Activated T-helper 1 cell treated with anti-CD3 and anti-CD28 coated beads, Interleukin-12 subunit alpha, Interleukin-12 subunit beta, Interleukin-2, Interleukin-4 antibody, amounts not matched to agents 30 ng/mL and 10 ng/mL and 1 ng/mL, durations not matched to agents 14 hours and 24 hours and 36 hours (primary cell): ENCODE measurements at regions of chr15 and their contacts with region 1.

Region 1: DNA sequence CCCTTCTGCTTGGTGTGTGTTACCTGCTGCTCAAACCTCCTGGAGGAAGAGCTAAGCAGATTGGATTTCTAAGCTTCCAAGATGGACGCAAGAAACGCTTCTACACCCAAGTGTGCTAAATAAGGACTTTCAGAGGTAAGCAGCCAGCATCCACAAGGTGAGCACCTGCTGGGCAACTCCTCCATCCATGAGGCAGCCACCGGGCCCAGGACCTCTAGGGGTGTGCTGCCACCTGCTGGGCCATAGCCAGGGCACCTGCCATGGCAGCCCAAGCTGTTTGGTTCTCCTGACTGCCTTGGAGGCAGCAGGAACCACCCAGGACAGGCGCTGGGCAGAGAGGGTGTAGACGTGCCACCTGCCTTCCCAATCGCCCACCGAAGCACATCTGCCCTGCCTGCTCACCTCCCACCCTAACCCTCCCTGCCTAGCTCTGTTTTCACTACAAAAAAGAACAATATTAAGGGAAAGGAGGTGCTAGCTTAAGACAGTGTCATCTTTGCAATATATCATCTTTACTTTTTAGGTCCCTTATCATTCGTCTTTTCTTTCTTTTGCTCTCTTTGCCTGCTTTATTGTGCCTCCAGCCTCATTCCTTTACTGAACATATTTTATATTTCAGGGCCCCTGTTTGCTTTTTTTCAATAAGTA is 12.9 kb downstream of the C15orf62 start:
- DNase-seq: peak; percentile 74
- H3K4me3 Mint-ChIP-seq: no peak overlapping the region
- H3K27ac Mint-ChIP-seq: no peak overlapping the region
- H3K4me1 Mint-ChIP-seq: peaks cover 21% of the 10 kb centered on the region
- H3K27me3 Mint-ChIP-seq: no peaks in the 10 kb centered on the region

Region 2: DNA sequence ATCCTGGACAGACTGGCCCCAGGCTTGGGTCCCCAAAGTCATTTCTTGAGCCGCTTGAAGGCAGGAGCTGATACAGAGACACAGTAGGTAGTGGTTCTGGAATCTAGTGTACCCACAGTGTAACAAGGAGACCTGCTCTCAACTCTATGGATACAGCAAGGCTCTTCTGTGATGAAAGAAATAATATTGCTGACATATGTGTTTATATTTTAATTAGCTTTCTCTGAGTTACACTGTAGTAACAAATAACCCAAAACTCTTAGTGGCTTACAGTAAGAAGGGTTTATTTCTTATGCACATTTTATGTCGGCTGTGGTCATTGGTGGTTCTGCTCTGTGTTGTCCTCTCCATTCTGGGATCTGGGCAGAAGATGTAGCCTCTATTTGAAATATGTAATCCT is 266.4 kb before region 1 on chr15:
- intact Hi-C with region 1: loop called (anchors 1 kb)
- DNase-seq: no peak
- H3K4me3 Mint-ChIP-seq: no peak overlapping the region
- H3K27ac Mint-ChIP-seq: no peak overlapping the region
- H3K4me1 Mint-ChIP-seq: peaks cover 12% of the 10 kb centered on the region
- H3K27me3 Mint-ChIP-seq: peaks cover 36% of the 10 kb centered on the region

Region 3: GRCh38 chr15:40593588-40594428 is 188.9 kb before region 1 on chr15 and contains the start of gene KNL1:
- intact Hi-C with region 1: loop called (anchors 2 kb)
- DNase-seq: peak; percentile 88
- H3K4me3 Mint-ChIP-seq: peak within 1 kb of the TSS; percentile 93
- H3K27ac Mint-ChIP-seq: peak within 1 kb of the TSS; percentile 98
- H3K4me1 Mint-ChIP-seq: peaks cover 45% of the 10 kb centered on the region
- H3K27me3 Mint-ChIP-seq: peaks cover 2% of the 10 kb centered on the region
- total RNA-seq, gene KNL1: 21.6 and 22.4 TPM in 2 replicates

Region 4: DNA sequence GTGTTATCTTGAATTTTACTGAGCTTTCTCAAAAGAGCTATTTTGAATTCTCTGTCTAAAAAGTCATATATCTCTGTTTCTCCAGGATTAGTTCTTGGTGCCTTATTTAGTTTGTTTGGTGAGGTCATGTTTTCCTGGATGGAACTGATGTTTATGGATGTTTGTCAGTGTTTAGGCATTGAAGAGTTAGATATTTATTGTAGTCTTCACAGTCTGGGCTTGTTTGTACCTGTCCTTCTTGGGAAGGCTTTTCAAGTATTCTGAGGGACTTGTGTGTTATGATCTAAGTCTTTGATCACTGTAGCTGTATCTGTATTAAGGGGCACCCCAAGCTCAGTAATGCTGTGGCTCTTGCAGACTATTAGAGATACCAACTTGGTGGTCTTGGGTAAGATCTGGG is 98.3 kb before region 1 on chr15:
- intact Hi-C with region 1: loop called (anchors 1 kb)
- DNase-seq: no peak
- H3K4me3 Mint-ChIP-seq: no peak overlapping the region
- H3K27ac Mint-ChIP-seq: no peak overlapping the region
- H3K4me1 Mint-ChIP-seq: no peaks in the 10 kb centered on the region
- H3K27me3 Mint-ChIP-seq: no peaks in the 10 kb centered on the region

Region 5: GRCh38 chr15:40702077-40702476 is 80.6 kb before region 1 on chr15:
- intact Hi-C with region 1: loop called (anchors 1 kb)
- DNase-seq: no peak
- H3K4me3 Mint-ChIP-seq: no peak overlapping the region
- H3K27ac Mint-ChIP-seq: peak overlapping the region; percentile 18
- H3K4me1 Mint-ChIP-seq: peaks cover 36% of the 10 kb centered on the region
- H3K27me3 Mint-ChIP-seq: no peaks in the 10 kb centered on the region

Region 6: DNA sequence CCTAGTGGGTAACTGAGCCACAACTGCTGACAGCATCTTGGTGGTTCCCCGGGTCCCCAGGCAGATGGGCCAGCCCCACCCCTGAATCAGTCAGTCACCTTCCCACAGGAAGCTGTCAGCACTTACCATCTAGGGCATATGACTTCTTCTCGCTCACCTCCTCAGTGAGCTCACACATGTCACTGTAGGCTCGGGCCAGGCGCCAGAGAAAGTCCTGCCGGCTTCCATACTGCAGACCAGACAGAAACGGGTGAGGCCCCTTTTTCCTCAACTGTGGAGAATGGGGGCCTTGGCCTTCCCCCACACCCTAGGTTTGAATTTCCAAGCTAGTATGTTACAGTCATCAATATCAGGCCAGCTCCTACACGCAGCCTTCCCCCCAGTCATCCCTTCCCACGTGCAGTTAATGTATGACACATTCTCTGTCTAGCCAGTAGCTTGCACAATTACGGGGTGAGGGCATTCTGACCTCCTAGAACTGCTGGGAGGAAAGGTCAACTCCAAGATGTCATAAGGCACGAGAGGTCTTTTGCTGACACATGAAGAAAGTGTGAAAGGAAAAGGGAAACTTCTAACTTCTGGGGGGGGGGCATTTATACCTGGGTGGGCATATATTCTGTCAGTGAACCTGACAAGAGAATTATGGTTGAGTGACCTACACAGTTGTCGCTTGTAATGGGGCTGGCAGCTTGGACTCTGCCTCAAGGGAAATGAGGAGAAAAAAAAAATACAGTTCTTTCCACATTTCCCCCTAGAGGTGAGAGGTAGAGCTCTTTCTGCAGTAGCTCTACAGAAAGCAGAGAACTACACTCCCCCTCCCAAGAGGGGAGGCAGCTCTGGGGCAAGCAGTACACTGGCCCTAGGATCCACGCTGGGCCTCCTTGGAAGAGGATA is 38.5 kb before region 1 on chr15:
- intact Hi-C with region 1: loop called (anchors 2 kb)
- DNase-seq: peak; percentile 70
- H3K4me3 Mint-ChIP-seq: peak overlapping the region; percentile 60
- H3K27ac Mint-ChIP-seq: peak overlapping the region; percentile 95
- H3K4me1 Mint-ChIP-seq: peaks cover 43% of the 10 kb centered on the region
- H3K27me3 Mint-ChIP-seq: no peaks in the 10 kb centered on the region

Region 7: GRCh38 chr15:40763801-40764732 is 18.6 kb before region 1 on chr15 and contains the start of gene GCHFR:
- intact Hi-C with region 1: loop called (anchors 1 kb)
- DNase-seq: peak; percentile 73
- H3K4me3 Mint-ChIP-seq: peak within 1 kb of the TSS; percentile 81
- H3K27ac Mint-ChIP-seq: peak within 1 kb of the TSS; percentile 87
- H3K4me1 Mint-ChIP-seq: peaks cover 21% of the 10 kb centered on the region
- H3K27me3 Mint-ChIP-seq: peaks cover 2% of the 10 kb centered on the region
- total RNA-seq, gene GCHFR: 31.3 and 35.7 TPM in 2 replicates

Region 8: GRCh38 chr15:42528970-42529369 is 1746.3 kb after region 1 on chr15:
- intact Hi-C with region 1: no loop called
- DNase-seq: no peak
- H3K4me3 Mint-ChIP-seq: no peak overlapping the region
- H3K27ac Mint-ChIP-seq: no peak overlapping the region
- H3K4me1 Mint-ChIP-seq: no peaks in the 10 kb centered on the region
- H3K27me3 Mint-ChIP-seq: no peaks in the 10 kb centered on the region